CD14-positive monocyte (primary cell): ENCODE measurements at regions of chr2 and their contacts with region 1.

Region 1: DNA sequence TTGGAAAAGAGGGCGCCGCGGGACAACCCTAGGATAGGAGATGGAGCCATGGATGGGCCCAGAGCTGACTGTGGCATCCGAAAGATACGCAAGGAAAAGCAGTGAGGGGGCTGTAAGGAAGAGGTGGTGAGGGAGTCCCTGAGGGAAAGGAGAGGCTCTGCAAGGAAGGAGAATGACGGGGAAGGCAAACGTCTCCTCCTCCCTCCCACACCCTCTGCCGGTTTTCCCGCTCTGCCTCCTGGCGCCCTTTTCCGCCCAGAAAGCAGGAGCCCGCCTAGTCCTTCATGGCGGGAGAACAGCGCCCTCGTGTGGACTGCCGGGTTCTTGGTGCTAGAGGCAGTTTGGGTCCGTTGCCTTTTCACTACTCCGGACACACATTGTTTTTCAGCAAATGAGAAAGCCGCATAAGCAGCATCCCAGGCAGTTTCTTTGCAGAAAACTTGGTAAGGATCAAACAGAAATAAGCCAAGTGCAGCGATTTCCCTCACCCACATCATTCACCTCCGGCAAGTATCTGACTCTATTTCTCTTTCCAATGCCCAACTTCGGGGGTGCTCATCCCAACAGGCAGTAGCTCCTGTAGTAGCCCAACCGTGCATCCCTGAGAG is 200.4 kb downstream of the INO80D start:
- DNase-seq: peak; percentile 15 to 61 (median 60)
- H3K4me3 ChIP-seq: no peak overlapping the region
- H3K4me3 Mint-ChIP-seq: no peak overlapping the region
- H3K27ac ChIP-seq: no peak overlapping the region
- H3K27ac Mint-ChIP-seq: no peak overlapping the region
- H3K4me1 ChIP-seq: no peaks in the 10 kb centered on the region
- H3K4me1 Mint-ChIP-seq: peaks cover 3% of the 10 kb centered on the region
- H3K27me3 ChIP-seq: no peaks in the 10 kb centered on the region
- H3K27me3 Mint-ChIP-seq: peaks cover 6 to 9% (median 7%) of the 10 kb centered on the region in 3 donors
- CTCF ChIP-seq: peak; percentile 96

Region 2: GRCh38 chr2:205776139-205776538 is 109.5 kb before region 1 on chr2:
- intact Hi-C with region 1: loop called in 1 of 2 experiments (anchors 5 kb)
- DNase-seq: peak; percentile 11 to 52 (median 26)
- H3K4me3 ChIP-seq: no peak overlapping the region
- H3K4me3 Mint-ChIP-seq: no peak overlapping the region
- H3K27ac ChIP-seq: no peak overlapping the region
- H3K27ac Mint-ChIP-seq: no peak overlapping the region
- H3K4me1 ChIP-seq: no peaks in the 10 kb centered on the region
- H3K4me1 Mint-ChIP-seq: no peaks in the 10 kb centered on the region
- H3K27me3 ChIP-seq: no peaks in the 10 kb centered on the region
- H3K27me3 Mint-ChIP-seq: peaks cover 0 to 8% (median 2%) of the 10 kb centered on the region in 3 donors
- CTCF ChIP-seq: peak; percentile 75